ENCODE measurements at regions of chr16 and their contacts with region 1.

Region 1: DNA sequence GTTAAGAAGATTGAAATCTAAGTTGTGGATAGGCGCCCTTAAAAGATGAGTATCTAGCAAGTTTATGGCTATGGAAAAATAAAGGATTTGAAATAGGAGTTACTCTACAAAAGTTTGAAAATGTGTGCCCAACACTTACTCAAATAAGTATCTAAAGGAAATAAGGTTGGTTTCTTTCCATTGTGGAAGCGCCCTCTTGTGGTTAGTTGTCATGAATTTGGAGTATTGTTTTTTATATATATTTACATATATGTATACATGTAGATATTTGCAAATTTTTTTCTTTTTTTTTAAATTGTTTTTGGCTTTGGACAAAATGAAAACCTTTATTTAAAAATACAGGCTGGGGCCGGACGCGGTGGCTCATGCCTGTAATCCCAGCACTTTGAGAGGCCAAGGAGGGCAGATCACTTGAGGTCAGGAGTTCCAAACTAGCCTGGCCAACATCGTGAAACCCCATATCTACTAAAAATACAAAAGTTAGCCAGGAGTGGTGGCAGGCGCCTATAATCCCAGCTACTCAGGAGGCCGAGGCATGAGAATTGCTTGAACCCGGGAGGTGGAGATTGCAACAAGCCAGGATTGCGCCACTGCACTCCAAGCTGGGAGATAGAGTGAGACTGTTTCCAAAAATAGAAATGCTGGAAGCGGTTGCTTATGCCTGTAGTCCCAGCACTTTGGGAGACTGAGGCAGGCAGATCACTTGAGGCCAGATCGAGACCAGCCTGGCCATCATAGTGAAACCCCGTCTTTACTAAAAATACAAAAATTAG is 24.0 kb upstream of the VPS4A start:
- DNase-seq: peak in 2 of 5 donors; percentile 83 to 89
- H3K4me3 ChIP-seq: no peak overlapping the region
- H3K27ac ChIP-seq: no peak overlapping the region
- H3K4me1 ChIP-seq: no peaks in the 10 kb centered on the region
- H3K27me3 ChIP-seq: no peaks in the 10 kb centered on the region
- CTCF ChIP-seq: peak; percentile 36

Region 2: DNA sequence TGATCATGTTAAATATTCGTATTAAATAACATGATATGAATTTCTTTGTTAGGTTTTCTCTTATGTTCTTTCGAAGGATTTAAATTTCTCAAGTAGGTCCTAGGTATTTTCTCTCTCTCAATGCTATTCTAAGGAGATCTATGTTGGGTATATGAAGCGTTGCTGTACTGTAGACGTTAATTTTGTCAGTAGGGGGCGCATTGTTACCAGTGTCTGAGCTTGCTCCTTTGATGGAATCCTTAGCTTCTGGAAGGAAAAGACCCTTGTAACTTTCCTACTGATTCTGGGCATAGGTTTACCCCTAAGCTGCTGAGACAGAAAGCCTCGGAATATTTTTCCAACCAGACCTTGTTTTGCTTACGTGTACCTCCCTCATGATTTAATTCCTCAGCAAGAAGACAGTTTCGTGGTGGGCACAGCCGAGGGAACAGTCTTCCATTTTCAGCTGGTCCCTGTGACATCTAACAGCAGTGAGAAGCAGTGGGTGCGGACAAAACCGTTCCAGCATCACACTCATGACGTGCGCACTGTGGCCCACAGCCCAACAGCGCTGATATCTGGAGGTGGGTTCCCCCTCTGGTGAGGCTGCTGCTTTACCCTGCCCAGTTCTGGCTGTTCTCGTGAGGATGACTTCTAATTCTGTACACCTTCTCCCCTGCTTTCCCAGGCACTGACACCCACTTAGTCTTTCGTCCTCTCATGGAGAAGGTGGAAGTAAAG is 136.8 kb before region 1 on chr16:
- intact Hi-C with region 1: loop called (anchors 2 kb)
- DNase-seq: peak in 4 of 5 donors; percentile 55 to 93 (median 81)
- H3K4me3 ChIP-seq: no peak overlapping the region
- H3K27ac ChIP-seq: no peak overlapping the region
- H3K4me1 ChIP-seq: no peaks in the 10 kb centered on the region
- H3K27me3 ChIP-seq: no peaks in the 10 kb centered on the region
- CTCF ChIP-seq: peak; percentile 78

Measured in kidney (tissue), 22 donors.